Posterior cingulate gyrus (tissue), 11 donors: ENCODE measurements at regions of chr13 and their contacts with region 1.

Region 1: DNA sequence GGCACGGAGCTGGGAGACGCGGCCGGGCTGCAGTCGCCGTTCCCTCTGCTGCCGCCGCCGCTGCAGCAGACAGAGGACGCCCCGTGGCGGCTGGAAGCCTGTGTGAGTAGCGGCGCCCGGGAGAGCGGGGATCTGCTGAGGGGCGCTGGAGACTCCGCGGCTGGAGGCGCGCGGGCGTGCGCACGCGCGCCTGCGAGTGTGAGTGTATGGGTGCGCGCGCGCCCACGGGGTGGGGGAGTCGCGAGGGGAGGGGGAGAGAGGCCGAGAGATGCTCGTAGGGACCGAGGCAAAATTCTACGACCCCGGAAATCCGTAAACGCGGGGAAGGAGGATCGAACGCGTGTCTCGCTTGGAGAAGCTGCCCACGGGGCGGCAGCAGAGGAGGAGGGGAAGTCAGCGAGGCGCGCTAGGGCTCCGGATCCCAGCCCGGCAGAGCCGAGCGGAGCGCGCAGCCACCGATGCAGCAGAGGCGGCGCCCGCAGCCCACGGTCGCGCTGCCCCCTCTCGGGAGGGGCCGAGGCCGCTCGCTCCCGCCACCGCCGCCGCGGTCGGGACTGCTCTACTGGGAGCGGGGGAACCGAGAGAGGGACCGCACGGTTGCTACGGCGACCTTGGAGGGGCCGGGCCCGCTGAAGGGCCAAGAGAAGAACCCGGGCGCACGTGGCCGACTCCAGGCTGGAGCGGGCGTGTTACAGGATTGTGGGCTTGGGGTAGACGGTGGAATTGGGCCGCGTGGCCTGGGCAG is at the start of gene ENOX1:
- DNase-seq: peak; percentile 76 to 98 (median 84)

Region 2: GRCh38 chr13:43085545-43085944 is 701.4 kb before region 1 on chr13:
- intact Hi-C with region 1: loop called (anchors 5 kb)
- DNase-seq: no peak

Region 3: DNA sequence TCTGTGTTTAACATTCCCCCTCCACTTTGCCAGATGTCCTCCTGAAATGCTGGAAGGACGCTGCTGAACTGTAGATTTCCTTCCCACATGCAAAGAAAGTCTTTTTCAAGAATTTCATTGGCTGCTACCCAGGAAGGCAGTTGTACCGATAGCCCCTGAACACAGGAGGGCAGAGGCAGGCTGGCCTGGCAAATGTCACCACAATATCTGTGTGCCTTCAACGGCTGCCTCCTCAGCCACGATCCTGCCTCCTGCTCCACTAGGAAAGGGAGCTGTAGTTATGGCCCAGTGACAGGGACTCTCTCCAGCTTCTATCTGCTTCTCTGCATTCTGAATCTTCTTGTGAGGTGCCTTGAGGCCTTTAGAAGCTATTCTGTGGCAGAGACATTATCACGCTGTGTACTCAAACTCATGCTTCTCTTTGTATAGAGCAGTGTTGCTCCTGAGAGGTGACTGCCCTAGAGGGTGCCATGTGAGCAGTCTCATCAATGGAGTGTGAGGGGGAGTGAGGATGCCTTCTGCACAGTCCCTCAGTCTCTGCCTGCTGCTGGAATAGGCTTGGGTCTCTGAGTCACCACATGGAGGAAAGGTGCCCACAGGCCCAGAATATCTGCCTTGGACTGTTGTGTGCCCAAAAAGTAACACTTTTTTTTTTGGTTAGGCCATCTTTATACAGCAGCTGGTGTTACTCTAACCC is 483.8 kb before region 1 on chr13:
- intact Hi-C with region 1: loop called (anchors 5 kb)
- DNase-seq: peak in 9 of 10 donors; percentile 50 to 94 (median 64)

Region 4: DNA sequence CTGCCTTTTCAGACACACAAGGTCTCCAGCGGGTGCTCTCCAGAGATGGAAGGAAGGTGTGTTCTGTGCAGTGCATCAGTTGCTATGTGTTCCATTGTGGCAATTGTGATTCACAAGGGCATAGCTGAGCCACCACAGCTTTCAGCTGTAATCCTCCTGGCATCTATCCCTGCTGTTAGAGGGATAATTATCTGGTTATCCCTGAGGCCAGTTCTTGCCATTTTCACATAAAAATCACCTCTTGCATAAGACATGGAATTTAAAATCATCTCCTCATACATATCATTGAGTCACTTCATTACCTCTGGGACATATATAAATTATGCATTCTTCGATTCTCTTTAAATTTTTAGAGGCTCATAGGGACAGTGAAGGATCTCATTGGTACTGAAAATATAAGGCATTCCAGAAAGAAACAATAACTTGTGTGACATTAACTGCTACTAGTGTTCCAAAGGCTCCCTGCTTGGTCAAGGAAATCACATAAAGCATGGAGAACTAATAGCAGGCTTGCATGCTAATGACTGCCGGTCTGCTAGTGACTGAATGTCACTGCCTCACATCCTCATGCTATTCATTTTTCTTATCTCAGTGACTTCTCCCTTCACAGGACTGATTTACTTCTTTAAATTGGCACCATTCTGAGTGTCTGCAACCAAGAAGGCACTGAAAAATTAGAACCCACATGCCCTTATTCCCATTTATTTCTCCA is 214.1 kb before region 1 on chr13:
- intact Hi-C with region 1: loop called (anchors 10 kb)
- DNase-seq: no peak

Region 5: DNA sequence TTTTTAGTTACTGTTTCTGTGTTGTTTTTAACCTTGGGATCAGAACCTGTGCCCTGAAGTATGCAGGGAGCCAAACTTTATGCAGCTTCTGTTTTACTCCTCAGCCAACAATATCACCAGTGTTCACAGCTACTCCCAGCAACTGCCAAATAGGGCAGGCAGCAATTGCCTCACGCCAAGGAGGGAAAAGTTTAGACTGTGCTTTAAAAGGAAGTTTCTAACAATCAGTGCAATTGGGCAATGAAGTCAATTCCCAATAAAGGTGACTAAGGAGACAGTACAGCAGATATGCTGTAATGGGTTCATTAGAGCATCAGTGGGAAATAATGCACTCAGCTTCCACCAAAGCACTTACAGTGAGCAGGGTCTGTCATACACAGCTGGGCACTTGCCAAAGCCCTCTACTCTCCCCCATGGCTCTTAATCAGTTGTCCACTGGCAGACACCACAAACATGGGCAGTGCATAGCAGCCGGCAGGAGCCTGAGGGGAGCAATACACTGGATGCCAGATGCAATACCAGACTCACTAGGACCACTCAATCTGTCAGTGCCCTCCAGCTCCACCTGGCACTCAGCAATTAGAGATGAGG is 19.5 kb before region 1 on chr13:
- intact Hi-C with region 1: no loop called
- DNase-seq: peak in 1 of 10 donors; percentile 25

Region 6: GRCh38 chr13:43874504-43875092 is 87.7 kb after region 1 on chr13:
- intact Hi-C with region 1: loop called (anchors 2 kb)
- DNase-seq: no peak